T-cell (primary cell): ENCODE measurements at regions of chr14 and their contacts with region 1.

Region 1: DNA sequence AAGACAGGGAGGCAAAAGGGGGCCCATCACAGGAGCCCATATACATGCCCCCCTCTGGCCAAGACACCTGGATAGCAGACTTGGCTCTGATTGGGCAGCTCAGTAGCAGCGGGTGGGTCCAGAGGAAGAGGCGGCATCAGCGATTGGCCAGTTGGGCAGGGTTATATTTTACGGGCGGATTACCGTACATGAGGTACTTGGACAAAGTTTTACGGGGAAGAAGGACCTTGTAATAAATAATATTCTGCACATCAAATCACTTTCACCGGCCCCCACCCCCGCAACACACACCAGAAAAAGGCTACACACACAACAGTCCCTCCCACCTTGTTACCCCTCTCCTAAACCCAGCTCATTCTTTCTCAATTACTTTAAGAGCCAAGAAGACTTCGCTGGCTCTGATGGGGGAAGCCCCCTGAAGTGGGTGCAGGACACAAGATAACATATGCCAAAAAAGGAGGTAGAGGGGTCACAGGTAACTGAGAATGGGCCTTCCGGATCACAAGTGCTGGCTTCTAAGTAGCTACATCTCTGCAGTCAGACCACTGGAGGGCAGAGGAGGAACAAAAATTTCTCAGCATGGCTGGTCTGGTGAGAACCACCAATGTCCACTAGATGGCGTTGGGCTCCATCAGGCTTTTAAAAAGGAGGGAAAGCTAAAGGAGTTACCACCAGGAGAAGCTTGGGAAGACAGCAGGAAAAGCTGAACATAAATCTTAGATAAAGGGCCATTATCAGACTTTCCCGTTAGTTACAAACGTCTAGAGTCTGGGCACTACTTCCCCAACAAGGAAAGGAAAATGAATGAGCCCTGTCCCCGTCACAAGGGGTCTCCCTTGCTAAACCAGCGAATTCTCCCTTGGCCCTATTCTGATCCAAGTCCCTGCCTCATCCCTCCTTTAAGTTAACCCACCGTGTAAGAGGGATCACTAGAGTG is 11.4 kb upstream of the CDH24 start:
- DNase-seq: peak; percentile 40 to 90 (median 66)
- ATAC-seq: peak; percentile 76 to 86 (median 79)
- H3K4me3 ChIP-seq: no peak overlapping the region
- H3K4me3 Mint-ChIP-seq: peak overlapping the region; percentile 17 to 34 (median 31)
- H3K27ac ChIP-seq: peak overlapping the region; percentile 38
- H3K27ac Mint-ChIP-seq: peak overlapping the region; percentile 61
- H3K4me1 ChIP-seq: peaks cover 12 to 37% of the 10 kb centered on the region in 2 experiments
- H3K4me1 Mint-ChIP-seq: peaks cover 35 to 45% (median 41%) of the 10 kb centered on the region in 3 donors
- H3K27me3 ChIP-seq: no peaks in the 10 kb centered on the region
- H3K27me3 Mint-ChIP-seq: no peaks in the 10 kb centered on the region

Region 2: DNA sequence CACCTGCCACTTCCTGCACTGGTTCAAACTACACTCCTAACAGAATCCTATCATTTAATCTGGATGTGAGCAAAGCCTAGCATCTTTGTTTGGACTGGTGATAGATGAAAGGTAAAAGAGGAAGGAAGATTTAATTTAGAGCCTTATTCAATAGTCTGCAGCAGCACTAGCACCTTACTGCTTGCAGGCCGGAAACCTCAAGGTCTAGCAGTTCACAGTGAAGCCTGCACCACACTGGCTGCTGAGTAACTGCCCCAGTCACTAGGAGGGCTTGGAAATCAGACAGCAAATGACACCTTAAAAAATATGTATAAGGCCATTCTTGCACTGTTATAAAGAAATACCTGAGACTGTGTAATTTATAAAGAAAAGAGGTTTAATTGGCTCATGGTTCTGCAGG is 837.7 kb before region 1 on chr14:
- CTCF ChIA-PET with region 1: no interaction called
- POLR2A ChIA-PET with region 1: no interaction called
- DNase-seq: peak in 17 of 35 experiments; percentile 1 to 36 (median 8)
- ATAC-seq: peak; percentile 58 to 82 (median 80)
- H3K4me3 ChIP-seq: no peak overlapping the region
- H3K4me3 Mint-ChIP-seq: peak overlapping the region in 1 of 3 donors; percentile 48
- H3K27ac ChIP-seq: no peak overlapping the region
- H3K27ac Mint-ChIP-seq: peak overlapping the region; percentile 61 to 72
- H3K4me1 ChIP-seq: peaks cover 4 to 7% of the 10 kb centered on the region in 2 experiments
- H3K4me1 Mint-ChIP-seq: peaks cover 9 to 25% (median 16%) of the 10 kb centered on the region in 3 donors
- H3K27me3 ChIP-seq: no peaks in the 10 kb centered on the region
- H3K27me3 Mint-ChIP-seq: no peaks in the 10 kb centered on the region

Region 3: DNA sequence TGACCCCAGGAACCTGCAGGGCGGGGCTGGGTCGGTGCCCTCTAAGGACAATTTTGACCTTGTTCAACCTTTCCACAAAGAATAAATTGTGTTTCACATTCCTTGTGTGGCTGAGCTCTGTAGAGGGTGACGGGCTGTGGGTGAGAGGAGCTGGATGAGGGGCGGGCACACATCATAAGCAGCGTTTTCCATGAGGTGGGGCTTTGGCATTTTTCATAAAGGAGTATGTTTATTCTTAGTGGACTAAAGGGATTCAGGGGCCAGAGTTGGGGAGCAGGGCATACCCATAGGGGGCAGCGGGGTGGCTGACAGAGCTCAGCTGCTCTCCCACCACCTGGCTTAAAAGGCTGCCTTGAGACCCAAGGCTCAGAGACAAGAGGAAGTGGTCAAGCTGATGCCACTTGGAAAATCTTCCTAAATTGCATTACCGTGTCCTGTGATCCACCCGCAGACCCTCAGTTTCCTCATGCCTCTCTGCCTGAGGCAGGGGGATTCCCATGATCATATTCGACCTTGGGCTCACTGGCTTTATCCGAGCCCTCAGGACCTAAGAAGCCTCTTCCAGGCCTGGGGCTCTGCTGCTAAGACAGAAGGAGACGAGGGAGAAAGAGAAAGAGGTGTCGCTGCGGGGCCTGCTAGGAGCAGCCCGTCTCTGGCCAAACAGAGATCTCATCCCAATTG is 220.9 kb before region 1 on chr14:
- CTCF ChIA-PET with region 1: no interaction called
- POLR2A ChIA-PET with region 1: no interaction called
- DNase-seq: no peak
- ATAC-seq: no peak
- H3K4me3 ChIP-seq: no peak overlapping the region
- H3K4me3 Mint-ChIP-seq: no peak overlapping the region
- H3K27ac ChIP-seq: no peak overlapping the region
- H3K27ac Mint-ChIP-seq: no peak overlapping the region
- H3K4me1 ChIP-seq: peaks cover 0 to 1% of the 10 kb centered on the region in 2 experiments
- H3K4me1 Mint-ChIP-seq: peaks cover 0 to 3% (median 2%) of the 10 kb centered on the region in 3 donors
- H3K27me3 ChIP-seq: peaks cover 0 to 62% of the 10 kb centered on the region in 2 experiments
- H3K27me3 Mint-ChIP-seq: peaks cover 17 to 34% of the 10 kb centered on the region in 2 donors

Region 4: DNA sequence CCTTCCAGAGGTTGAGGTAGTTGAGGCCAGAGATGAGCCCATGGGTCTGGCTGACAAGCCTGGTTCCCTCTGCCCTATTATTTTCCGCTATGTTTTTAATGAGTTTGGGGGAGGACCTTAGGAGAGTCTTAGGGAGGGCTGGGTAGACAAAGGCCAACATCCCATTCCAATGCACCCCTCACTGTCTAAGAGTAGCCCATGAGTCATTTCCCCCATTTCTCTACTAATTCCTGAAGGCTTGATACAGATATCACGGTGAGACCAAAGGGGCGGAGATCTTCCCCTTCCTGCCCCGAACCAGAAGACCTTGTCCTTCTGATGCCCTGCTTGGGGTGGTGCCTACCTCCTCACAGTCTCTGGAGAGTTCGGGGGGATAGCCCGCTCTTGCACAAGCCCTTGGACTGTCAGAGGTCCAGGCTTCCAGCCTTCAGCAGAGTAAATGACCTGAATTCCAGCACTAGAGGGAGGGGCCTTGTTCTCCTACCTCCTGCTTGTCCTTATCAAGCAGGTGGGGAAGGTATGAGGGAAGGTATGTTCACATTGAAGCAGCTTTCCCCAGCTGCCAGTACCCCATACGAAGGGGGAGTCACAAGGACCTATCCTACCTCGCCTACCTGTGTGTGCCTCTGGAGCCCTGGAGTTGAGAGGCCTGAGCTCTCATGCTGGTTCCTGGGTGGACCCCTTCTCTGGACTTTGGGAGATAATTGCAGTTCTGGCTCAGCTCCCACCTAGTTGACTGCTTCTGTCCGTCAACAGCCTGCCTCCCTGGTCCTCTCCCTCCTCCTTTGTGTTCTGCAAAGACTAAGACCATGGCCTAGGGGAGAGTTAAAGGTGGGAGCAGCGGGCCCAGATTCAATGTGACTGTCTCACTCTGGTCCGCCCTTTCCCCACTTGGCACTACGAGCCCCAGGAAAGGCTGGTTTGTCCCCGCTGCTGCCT is 23.1 kb before region 1 on chr14:
- CTCF ChIA-PET with region 1: no interaction called
- POLR2A ChIA-PET with region 1: no interaction called
- DNase-seq: no peak
- ATAC-seq: no peak
- H3K4me3 ChIP-seq: no peak overlapping the region
- H3K4me3 Mint-ChIP-seq: no peak overlapping the region
- H3K27ac ChIP-seq: no peak overlapping the region
- H3K27ac Mint-ChIP-seq: no peak overlapping the region
- H3K4me1 ChIP-seq: no peaks in the 10 kb centered on the region
- H3K4me1 Mint-ChIP-seq: no peaks in the 10 kb centered on the region
- H3K27me3 ChIP-seq: peaks cover 0 to 10% of the 10 kb centered on the region in 2 experiments
- H3K27me3 Mint-ChIP-seq: peaks cover 0 to 3% of the 10 kb centered on the region in 2 donors

Region 5: DNA sequence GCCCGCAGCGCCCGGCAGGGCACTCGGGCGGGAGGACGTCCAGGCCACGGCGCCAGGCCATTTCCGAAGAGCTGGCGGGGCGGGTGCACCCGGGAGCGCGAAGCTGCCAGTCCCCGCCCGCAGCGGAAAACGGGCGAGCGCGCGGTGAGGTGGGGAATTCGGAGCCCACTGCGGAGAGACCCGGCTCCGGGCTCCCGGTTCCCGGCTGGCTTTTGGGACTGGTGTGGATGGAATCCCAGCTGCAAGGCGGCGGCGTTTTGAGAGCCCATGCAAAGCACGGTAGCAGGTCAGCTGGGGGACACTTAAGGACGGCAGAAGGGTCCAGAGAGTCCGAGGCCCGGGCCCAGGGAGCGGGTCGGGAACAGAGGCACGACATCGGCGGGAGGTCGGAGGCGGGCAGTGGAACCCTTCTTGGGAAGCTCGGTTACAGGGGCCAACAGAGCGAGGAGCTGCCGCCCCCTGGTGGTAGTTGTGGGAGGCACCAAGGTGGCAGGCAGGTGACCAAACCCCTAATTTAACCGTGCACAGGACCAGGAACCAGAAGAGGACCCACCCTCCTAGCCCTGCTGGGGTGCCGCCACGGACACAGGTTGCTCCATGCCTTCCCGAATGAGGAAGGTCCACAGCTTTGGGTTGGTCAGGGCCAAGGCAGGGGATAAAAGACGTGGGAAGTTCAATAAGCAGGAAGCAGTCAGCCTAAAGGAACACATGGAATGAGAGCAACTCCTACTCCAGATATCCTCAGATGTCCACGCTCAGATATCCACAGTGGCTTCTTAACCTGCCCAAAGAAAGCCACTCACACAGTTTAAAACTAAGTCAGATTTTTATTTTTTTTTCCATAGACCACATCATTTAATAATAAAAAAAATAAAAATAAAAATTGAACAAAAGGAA is 10.7 kb before region 1 on chr14:
- CTCF ChIA-PET with region 1: interaction called, 5 to 12 read pairs
- POLR2A ChIA-PET with region 1: interaction called in 1 of 2 experiments, 7 read pairs
- DNase-seq: peak; percentile 61 to 93 (median 80)
- ATAC-seq: peak; percentile 71 to 77 (median 72)
- H3K4me3 ChIP-seq: peak overlapping the region; percentile 77 to 86
- H3K4me3 Mint-ChIP-seq: peak overlapping the region; percentile 82 to 84 (median 84)
- H3K27ac ChIP-seq: no peak overlapping the region
- H3K27ac Mint-ChIP-seq: peak overlapping the region; percentile 70 to 81
- H3K4me1 ChIP-seq: peaks cover 6 to 20% of the 10 kb centered on the region in 2 experiments
- H3K4me1 Mint-ChIP-seq: peaks cover 14 to 21% (median 17%) of the 10 kb centered on the region in 3 donors
- H3K27me3 ChIP-seq: peaks cover 0 to 6% of the 10 kb centered on the region in 2 experiments
- H3K27me3 Mint-ChIP-seq: no peaks in the 10 kb centered on the region

Region 6: DNA sequence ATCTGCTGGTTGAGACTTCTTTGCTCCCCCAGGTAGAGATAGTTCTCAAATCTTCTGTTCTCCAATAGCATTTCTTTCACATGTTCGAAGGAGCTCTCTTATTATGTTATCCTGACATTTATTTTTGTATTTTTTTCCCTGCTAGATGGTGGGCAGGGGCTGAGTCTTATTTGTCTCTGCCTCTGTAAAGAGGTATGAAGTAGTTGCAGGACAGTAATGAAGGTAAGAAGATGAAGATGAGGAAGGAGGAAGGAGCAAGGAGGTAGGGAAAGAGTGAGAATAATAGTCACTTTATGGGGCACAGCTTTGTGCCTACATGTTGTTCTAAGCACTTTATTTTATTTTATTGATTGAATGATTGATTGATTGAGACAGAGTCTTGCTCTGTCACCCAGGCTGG is 41.0 kb after region 1 on chr14:
- CTCF ChIA-PET with region 1: interaction called, 4 to 11 read pairs
- POLR2A ChIA-PET with region 1: no interaction called
- DNase-seq: no peak
- ATAC-seq: no peak
- H3K4me3 ChIP-seq: no peak overlapping the region
- H3K4me3 Mint-ChIP-seq: no peak overlapping the region
- H3K27ac ChIP-seq: no peak overlapping the region
- H3K27ac Mint-ChIP-seq: no peak overlapping the region
- H3K4me1 ChIP-seq: no peaks in the 10 kb centered on the region
- H3K4me1 Mint-ChIP-seq: peaks cover 4 to 8% (median 4%) of the 10 kb centered on the region in 3 donors
- H3K27me3 ChIP-seq: peaks cover 0 to 35% of the 10 kb centered on the region in 2 experiments
- H3K27me3 Mint-ChIP-seq: peaks cover 0 to 4% of the 10 kb centered on the region in 2 donors

Region 7: GRCh38 chr14:23186913-23187654 is 118.3 kb after region 1 on chr14:
- CTCF ChIA-PET with region 1: interaction called, 4 to 16 read pairs
- POLR2A ChIA-PET with region 1: no interaction called
- DNase-seq: peak in 14 of 35 experiments; percentile 6 to 65 (median 15)
- ATAC-seq: peak in 3 of 4 experiments; percentile 43 to 62 (median 44)
- H3K4me3 ChIP-seq: no peak overlapping the region
- H3K4me3 Mint-ChIP-seq: no peak overlapping the region
- H3K27ac ChIP-seq: no peak overlapping the region
- H3K27ac Mint-ChIP-seq: peak overlapping the region in 1 of 2 donors; percentile 35
- H3K4me1 ChIP-seq: peaks cover 11 to 12% of the 10 kb centered on the region in 2 experiments
- H3K4me1 Mint-ChIP-seq: peaks cover 0 to 5% (median 2%) of the 10 kb centered on the region in 3 donors
- H3K27me3 ChIP-seq: peaks cover 0 to 8% of the 10 kb centered on the region in 2 experiments
- H3K27me3 Mint-ChIP-seq: no peaks in the 10 kb centered on the region